ENCODE measurements at regions of chr3 and their contacts with region 1.

Region 1: DNA sequence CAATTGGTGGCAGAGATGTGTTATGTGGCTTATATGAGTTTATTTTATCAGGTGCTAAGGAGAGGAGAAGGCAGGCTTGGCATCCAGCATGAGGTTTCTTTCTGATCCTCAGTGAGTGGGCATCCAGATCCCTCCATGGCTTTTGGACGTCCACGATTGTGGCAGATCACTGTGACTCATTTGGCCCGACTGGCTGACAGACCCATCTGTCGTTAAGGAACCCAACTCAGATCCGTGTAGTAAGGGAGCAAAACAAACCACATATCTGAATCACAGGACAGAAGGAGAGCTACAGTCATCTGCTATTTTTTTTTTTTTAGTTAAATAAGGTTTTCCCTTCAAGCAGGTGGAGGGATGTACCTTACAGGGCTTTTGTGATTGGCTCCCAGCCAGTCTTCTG is 197.0 kb upstream of the KCNH8 start:
- DNase-seq: no peak
- ATAC-seq: no peak
- H3K4me3 ChIP-seq: no peak overlapping the region
- H3K27ac ChIP-seq: no peak overlapping the region
- H3K4me1 ChIP-seq: no peaks in the 10 kb centered on the region
- H3K27me3 ChIP-seq: no peaks in the 10 kb centered on the region
- CTCF ChIP-seq: no peak

Region 2: DNA sequence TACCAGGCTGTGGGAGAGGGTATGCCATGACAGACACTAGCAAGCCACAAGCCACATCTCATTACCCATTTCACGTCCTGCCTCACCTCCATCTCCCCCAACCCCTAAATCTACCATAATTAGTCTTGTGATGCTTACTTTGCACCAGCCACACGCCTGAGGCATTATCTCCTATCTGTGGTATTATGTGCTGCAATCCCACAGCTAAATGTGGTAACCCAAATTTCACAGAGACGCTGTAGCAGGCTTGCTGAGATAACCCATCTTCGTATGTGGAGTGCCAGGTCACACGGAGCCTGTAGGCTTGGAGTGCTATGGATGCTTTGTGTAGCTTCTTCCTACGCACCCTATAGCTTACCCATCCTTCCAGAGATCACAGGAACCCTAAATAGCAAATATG is 59.7 kb before region 1 on chr3:
- intact Hi-C with region 1: no loop called
- DNase-seq: no peak
- ATAC-seq: no peak
- H3K4me3 ChIP-seq: no peak overlapping the region
- H3K27ac ChIP-seq: no peak overlapping the region
- H3K4me1 ChIP-seq: no peaks in the 10 kb centered on the region
- H3K27me3 ChIP-seq: peaks cover 0 to 4% (median 0%) of the 10 kb centered on the region in 7 donors
- CTCF ChIP-seq: no peak

Region 3: DNA sequence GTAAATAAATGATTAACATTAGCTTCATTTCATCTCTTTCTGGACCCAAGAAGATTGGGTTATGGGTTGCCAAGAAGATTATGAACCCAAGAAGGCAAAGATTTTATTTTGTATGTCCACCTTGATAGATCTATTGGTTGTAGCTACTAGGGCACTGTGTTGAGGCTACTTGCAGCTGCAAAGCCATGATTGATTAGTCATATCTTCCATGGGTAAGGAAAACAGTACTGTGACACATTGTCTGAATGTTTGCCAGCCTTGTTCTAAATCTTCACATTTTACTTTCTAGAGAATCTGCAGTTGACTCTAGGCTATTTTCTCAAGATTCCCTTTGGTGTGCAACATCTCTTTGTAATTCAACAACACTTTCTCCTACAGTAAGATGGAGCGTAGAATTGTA is 32.2 kb before region 1 on chr3:
- intact Hi-C with region 1: loop called in 1 of 10 experiments (anchors 2 kb)
- DNase-seq: no peak
- ATAC-seq: no peak
- H3K4me3 ChIP-seq: no peak overlapping the region
- H3K27ac ChIP-seq: no peak overlapping the region
- H3K4me1 ChIP-seq: no peaks in the 10 kb centered on the region
- H3K27me3 ChIP-seq: no peaks in the 10 kb centered on the region
- CTCF ChIP-seq: no peak